CD4-positive, alpha-beta memory T cell (primary cell): ENCODE measurements at regions of chr4 and their contacts with region 1.

Region 1: GRCh38 chr4:173288296-173288695 is 45.9 kb downstream of the HMGB2 start:
- DNase-seq: peak; percentile 45 to 68 (median 52)
- H3K4me3 ChIP-seq: no peak overlapping the region
- H3K4me3 Mint-ChIP-seq: peak overlapping the region in 6 of 8 donors; percentile 21 to 59 (median 43)
- H3K27ac ChIP-seq: no peak overlapping the region
- H3K27ac Mint-ChIP-seq: peak overlapping the region in 6 of 7 donors; percentile 16 to 78 (median 32)
- H3K4me1 ChIP-seq: peaks cover 11% of the 10 kb centered on the region
- H3K4me1 Mint-ChIP-seq: peaks cover 8 to 17% (median 13%) of the 10 kb centered on the region in 4 donors
- H3K27me3 ChIP-seq: no peaks in the 10 kb centered on the region
- H3K27me3 Mint-ChIP-seq: no peaks in the 10 kb centered on the region

Region 2: DNA sequence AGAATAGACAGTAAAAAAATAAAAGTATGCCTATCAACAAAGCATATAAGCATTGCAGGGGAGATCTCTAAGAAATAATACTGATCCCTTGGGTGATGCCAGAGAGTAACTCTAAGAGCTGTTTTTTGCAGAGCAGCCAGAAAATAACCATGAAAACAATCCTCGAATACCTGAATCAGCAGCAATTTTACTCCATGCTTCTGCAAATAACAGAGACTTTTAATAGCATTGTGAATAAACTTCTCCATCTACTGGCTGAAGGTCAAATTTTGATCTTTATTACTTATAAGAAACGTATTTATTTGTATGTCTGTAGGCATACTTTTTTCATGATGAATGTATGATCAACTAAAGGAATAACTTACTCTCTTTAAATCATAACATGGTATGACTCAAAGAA is 1140.6 kb before region 1 on chr4:
- CTCF ChIA-PET with region 1: no interaction called
- POLR2A ChIA-PET with region 1: no interaction called
- intact Hi-C with region 1: no loop called
- DNase-seq: no peak
- H3K4me3 ChIP-seq: no peak overlapping the region
- H3K4me3 Mint-ChIP-seq: no peak overlapping the region
- H3K27ac ChIP-seq: no peak overlapping the region
- H3K27ac Mint-ChIP-seq: no peak overlapping the region
- H3K4me1 ChIP-seq: no peaks in the 10 kb centered on the region
- H3K4me1 Mint-ChIP-seq: no peaks in the 10 kb centered on the region
- H3K27me3 ChIP-seq: no peaks in the 10 kb centered on the region
- H3K27me3 Mint-ChIP-seq: no peaks in the 10 kb centered on the region

Region 3: GRCh38 chr4:173270312-173271027 is 17.8 kb before region 1 on chr4:
- CTCF ChIA-PET with region 1: interaction called, 10 read pairs
- POLR2A ChIA-PET with region 1: no interaction called
- intact Hi-C with region 1: no loop called
- DNase-seq: no peak
- H3K4me3 ChIP-seq: no peak overlapping the region
- H3K4me3 Mint-ChIP-seq: no peak overlapping the region
- H3K27ac ChIP-seq: no peak overlapping the region
- H3K27ac Mint-ChIP-seq: no peak overlapping the region
- H3K4me1 ChIP-seq: peaks cover 5% of the 10 kb centered on the region
- H3K4me1 Mint-ChIP-seq: peaks cover 0 to 10% (median 4%) of the 10 kb centered on the region in 4 donors
- H3K27me3 ChIP-seq: no peaks in the 10 kb centered on the region
- H3K27me3 Mint-ChIP-seq: no peaks in the 10 kb centered on the region

Region 4: GRCh38 chr4:173413036-173413435 is 124.7 kb after region 1 on chr4:
- CTCF ChIA-PET with region 1: interaction called, 10 read pairs
- POLR2A ChIA-PET with region 1: no interaction called
- intact Hi-C with region 1: loop called (anchors 1 kb)
- DNase-seq: no peak
- H3K4me3 ChIP-seq: no peak overlapping the region
- H3K4me3 Mint-ChIP-seq: no peak overlapping the region
- H3K27ac ChIP-seq: no peak overlapping the region
- H3K27ac Mint-ChIP-seq: no peak overlapping the region
- H3K4me1 ChIP-seq: no peaks in the 10 kb centered on the region
- H3K4me1 Mint-ChIP-seq: no peaks in the 10 kb centered on the region
- H3K27me3 ChIP-seq: no peaks in the 10 kb centered on the region
- H3K27me3 Mint-ChIP-seq: no peaks in the 10 kb centered on the region